Left lung (tissue), 14 donors: ENCODE measurements at regions of chr14 and their contacts with region 1.

Region 1: DNA sequence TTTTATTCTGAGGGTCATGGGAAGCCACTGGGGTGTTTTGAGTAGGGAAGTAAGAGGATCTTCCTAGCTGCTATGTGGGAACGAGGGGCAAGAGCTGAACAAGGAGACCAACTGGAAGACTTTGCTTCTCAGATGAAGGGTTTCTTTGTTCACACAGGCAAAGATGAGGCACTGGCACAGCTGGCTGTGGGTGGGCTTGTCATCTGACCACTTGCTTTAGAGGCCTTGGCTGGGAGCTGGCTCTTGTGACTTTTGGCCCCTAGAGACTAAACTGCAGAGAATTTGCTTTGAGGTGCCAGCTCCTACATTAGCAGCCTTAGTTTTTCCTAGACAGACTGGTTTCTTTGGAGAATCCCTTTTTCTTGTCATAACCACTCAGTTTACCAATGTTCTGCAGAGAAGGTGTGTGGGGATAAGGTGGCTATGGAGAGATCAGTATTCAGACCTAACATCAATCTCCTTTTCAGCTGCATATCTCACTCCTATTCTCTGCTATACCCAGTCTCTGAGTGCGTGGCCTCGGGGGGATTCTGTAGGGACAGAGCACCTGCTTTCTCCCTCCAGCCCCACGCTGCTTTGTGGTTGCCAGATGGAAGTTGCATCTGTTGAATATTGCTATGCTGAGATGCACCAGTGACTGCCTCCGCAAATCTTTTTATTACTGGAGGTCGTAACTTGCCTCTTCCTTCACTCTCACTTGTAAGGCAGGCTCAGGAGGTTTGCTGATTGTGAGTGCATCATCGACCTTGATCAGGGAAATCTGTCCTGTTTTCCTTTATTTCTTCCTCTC is 12.7 kb downstream of the PPP2R5C start:
- DNase-seq: no peak
- ATAC-seq: no peak
- H3K4me3 ChIP-seq: no peak overlapping the region
- H3K27ac ChIP-seq: no peak overlapping the region
- H3K4me1 ChIP-seq: no peaks in the 10 kb centered on the region
- H3K27me3 ChIP-seq: peaks cover 0 to 6% of the 10 kb centered on the region in 2 donors
- CTCF ChIP-seq: no peak

Region 2: GRCh38 chr14:101834800-101835547 is 60.8 kb after region 1 on chr14:
- intact Hi-C with region 1: no loop called
- DNase-seq: peak in 1 of 4 donors; percentile 58
- ATAC-seq: peak; percentile 37
- H3K4me3 ChIP-seq: no peak overlapping the region
- H3K27ac ChIP-seq: peak overlapping the region in 1 of 2 donors; percentile 43
- H3K4me1 ChIP-seq: peaks cover 12 to 33% of the 10 kb centered on the region in 2 donors
- H3K27me3 ChIP-seq: no peaks in the 10 kb centered on the region
- CTCF ChIP-seq: no peak

Region 3: DNA sequence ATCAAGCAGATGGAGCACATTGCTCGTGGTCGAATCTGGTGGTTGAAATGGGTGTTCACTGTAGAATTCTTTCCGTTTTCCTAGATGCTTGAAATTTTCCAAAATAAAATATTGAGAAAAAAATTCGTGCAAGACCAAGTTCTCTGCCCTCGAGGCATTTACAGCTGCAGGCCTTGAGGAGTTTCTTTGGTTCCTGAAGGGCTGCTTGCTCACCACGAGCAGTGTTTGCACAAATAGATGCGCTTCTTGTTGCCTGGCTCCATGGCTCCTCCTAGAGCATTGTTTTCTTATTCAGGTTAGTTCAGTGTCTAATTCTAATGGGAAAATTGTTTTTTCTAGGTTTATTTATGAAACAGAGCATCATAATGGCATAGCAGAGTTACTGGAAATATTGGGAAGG is 115.7 kb after region 1 on chr14:
- intact Hi-C with region 1: loop called in 1 of 2 experiments (anchors 10 kb)
- DNase-seq: peak in 1 of 4 donors; percentile 10
- ATAC-seq: peak; percentile 50
- H3K4me3 ChIP-seq: no peak overlapping the region
- H3K27ac ChIP-seq: no peak overlapping the region
- H3K4me1 ChIP-seq: no peaks in the 10 kb centered on the region
- H3K27me3 ChIP-seq: no peaks in the 10 kb centered on the region
- CTCF ChIP-seq: no peak

Region 4: DNA sequence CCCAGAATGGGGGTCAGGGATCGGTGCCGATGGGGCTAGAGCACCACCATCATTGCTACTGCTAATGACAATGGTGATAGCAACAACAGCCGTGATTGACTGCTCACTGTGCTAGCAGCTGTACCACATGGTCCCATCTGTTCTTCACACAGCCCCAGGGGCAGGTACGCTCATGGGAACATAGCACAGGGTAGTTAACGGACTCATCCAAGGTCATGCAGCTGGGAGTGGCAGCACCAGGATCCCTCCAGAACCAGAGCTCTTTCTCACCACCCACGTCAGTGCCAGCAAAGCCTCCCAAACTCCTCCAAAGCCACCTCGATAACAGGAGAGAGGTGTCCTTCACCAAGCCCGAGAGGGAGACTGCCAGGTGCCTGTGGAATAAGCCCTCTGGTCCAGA is 178.9 kb after region 1 on chr14:
- intact Hi-C with region 1: loop called in 1 of 2 experiments (anchors 10 kb)
- DNase-seq: peak in 1 of 4 donors; percentile 34
- ATAC-seq: no peak
- H3K4me3 ChIP-seq: no peak overlapping the region
- H3K27ac ChIP-seq: no peak overlapping the region
- H3K4me1 ChIP-seq: peaks cover 9 to 13% of the 10 kb centered on the region in 2 donors
- H3K27me3 ChIP-seq: no peaks in the 10 kb centered on the region
- CTCF ChIP-seq: no peak

Region 5: DNA sequence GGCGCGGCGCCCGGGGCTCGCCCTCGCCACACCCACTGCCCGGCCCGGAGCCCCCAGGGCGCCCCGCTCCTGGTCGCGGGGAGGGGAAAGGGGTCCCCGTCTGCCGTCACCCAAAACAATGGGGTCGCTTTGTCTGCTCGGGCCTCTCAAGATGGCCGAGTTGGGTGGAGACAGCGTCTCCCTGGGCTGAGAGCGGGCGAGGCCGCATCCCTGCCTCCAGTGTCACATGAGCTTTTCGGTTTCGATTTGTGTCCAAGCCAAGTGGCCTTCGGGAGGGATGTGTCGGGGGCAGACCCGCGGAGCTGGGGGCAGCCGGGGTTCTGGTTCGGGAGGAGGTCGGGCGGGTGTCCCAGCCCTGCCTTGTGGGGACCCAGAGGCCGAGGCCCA is 190.9 kb after region 1 on chr14:
- intact Hi-C with region 1: no loop called
- DNase-seq: peak; percentile 54 to 86 (median 78)
- ATAC-seq: peak; percentile 54
- H3K4me3 ChIP-seq: peak overlapping the region; percentile 97 to 100
- H3K27ac ChIP-seq: peak overlapping the region; percentile 94 to 97
- H3K4me1 ChIP-seq: peaks cover 15 to 57% of the 10 kb centered on the region in 2 donors
- H3K27me3 ChIP-seq: no peaks in the 10 kb centered on the region
- CTCF ChIP-seq: no peak